H1 (cell line): ENCODE measurements at regions of chr17 and their contacts with region 1.

Region 1: GRCh38 chr17:58344047-58344790 is 7.8 kb downstream of the SUPT4H1 start:
- DNase-seq: no peak
- H3K4me3 ChIP-seq: no peak overlapping the region
- H3K27ac ChIP-seq: no peak overlapping the region
- H3K4me1 ChIP-seq: peaks cover 0 to 5% (median 2%) of the 10 kb centered on the region in 4 experiments; a peak in 4 of 7 replicates
- H3K27me3 ChIP-seq: no peaks in the 10 kb centered on the region
- CTCF ChIP-seq: no peak
- EP300 ChIP-seq: no peak
- POLR2A ChIP-seq: peak in 1 of 2 experiments; percentile 39; a peak in 1 of 3 replicates
- RAD21 ChIP-seq: no peak

Region 2: DNA sequence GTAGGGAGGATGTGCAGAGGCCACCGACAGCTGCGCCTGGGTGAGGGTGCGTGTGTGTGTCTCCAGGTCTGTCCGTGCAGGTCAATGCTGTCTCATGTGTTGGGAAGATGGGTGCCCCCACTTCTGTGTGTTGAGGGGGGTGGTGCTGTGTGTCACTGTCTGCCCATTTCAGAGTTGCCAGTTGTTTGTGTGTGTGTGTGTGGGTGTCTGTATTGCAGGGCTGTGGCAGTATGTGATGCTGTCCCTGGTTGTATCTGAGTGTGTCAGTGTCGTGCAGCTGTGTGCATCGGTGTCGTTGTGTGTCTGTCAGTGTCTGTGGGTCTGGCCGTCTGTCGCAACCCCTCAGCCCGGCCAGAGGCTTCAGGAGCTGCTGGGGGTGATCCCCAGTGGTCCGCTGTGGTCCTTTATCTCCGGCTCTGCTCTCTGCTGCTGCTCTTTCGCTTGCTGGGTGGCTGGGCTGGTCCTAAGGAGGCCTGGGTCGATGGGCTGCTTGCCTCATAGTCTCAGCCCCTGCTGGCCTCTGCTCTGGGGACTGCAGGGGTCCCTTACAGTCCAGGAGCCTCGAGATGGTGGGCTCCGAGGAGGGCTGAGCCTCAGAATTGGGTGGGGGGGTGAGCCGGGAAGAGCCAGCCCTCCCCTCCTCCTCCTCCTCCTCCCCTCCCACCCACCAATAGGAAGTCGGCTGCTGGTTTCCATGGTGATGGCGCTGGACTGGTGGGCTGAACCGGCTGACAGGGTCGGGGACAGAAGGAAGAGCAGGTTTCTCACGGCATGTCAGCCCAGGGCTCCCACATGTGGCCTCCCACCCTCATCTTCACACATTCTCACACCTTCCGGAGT is 15.8 kb before region 1 on chr17 and contains the start of gene TSPOAP1:
- CTCF ChIA-PET with region 1: interaction called, 384 read pairs
- POLR2A ChIA-PET with region 1: interaction called, 66 read pairs
- DNase-seq: peak in 1 of 2 experiments; percentile 84
- H3K4me3 ChIP-seq: peak within 1 kb of the TSS in 3 of 4 experiments; percentile 7 to 40 (median 21); a peak in 4 of 8 replicates
- H3K27ac ChIP-seq: no peak within 1 kb of the TSS
- H3K4me1 ChIP-seq: peaks cover 0 to 42% (median 29%) of the 10 kb centered on the region in 4 experiments; a peak in 6 of 7 replicates
- H3K27me3 ChIP-seq: peaks cover 0 to 16% (median 10%) of the 10 kb centered on the region in 4 experiments; a peak in 5 of 7 replicates
- CTCF ChIP-seq: no peak
- EP300 ChIP-seq: no peak
- POLR2A ChIP-seq: no peak
- RAD21 ChIP-seq: no peak
- total RNA-seq, gene TSPOAP1: 9.2 and 9.8 TPM in 2 replicates

Region 3: DNA sequence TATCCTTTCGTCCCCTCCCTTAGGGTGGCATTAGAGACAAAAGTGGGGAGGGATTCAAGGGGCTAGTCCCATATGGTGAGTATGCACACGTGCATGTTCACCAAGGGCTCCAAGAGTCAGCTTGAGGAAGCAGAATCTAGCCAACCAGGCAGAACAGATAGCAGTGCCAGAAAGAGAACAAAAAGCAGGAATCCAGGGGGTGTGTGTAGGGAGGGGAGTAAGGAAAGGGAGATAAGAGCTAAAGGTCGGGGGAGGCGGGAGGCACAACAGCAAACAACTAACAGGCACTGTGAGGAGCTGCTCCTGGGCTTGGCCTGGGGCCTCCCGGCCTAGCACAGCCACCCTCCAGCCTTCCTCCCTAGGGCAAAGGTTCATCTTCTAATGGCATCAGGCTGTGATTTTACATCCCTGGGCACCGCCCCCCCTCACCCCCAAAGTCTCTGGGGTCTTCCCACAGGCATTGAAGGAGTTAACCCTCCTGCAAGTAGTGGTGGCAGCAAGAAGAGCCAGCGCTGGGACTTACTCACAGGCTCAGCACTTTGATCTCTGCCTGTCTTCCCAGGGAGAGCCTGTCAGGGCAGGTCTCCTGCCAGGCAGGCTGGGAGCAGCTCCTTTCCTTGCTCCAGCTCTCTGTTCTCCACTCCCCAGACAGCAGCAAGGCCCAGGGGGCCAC is 20.2 kb after region 1 on chr17:
- CTCF ChIA-PET with region 1: no interaction called
- POLR2A ChIA-PET with region 1: interaction called, 12 read pairs
- DNase-seq: no peak
- H3K4me3 ChIP-seq: no peak overlapping the region
- H3K27ac ChIP-seq: no peak overlapping the region
- H3K4me1 ChIP-seq: peaks cover 0 to 2% (median 0%) of the 10 kb centered on the region in 4 experiments; a peak in 1 of 7 replicates
- H3K27me3 ChIP-seq: no peaks in the 10 kb centered on the region
- CTCF ChIP-seq: no peak
- EP300 ChIP-seq: no peak
- POLR2A ChIP-seq: no peak
- RAD21 ChIP-seq: no peak